Calu3 (cell line): ENCODE measurements at regions of chr3 and their contacts with region 1.

Region 1: DNA sequence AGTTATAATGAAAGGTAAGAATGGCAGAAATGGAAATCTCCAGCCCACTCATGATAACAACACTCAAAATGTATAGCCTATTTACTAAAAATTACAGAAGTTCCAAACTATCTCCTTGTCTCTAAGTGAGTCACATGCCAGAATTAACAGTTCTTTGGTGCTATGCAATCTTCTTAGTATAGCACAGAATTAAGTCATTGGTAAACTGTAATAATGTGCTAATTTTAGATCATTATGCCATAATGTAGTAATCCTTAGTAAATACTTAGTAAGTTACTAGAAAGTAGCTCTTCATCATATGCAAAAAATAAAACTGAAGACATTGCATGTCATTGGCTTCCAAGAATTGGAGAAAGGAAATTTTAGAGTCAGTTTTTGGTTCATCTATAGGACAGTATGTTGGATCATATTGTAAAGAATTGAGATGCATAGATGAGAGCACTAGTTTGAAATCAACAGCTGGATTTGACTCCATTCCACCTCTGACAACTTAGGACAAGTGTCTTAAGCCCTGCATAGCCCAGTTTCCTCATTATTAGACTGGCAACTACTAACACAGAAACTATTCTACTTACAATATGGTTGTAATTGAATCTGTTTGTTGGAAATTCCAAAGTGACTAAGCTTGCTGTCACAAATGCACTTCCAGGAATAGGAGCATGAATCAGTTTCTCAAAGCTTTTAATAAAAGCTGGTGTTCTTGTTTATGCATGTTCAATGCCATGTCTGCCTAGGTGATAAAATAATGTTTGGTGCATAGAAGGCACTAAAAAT is 40.1 kb upstream of the CD47 start:
- DNase-seq: no peak
- H3K4me3 Mint-ChIP-seq: peak overlapping the region; percentile 2
- H3K27ac Mint-ChIP-seq: peak overlapping the region; percentile 56
- H3K4me1 Mint-ChIP-seq: peaks cover 62% of the 10 kb centered on the region
- H3K27me3 Mint-ChIP-seq: no peaks in the 10 kb centered on the region
- CTCF ChIP-seq: no peak

Region 2: GRCh38 chr3:107992981-107993684 is 137.8 kb before region 1 on chr3:
- CTCF ChIA-PET with region 1: no interaction called
- intact Hi-C with region 1: loop called (anchors 10 kb)
- DNase-seq: peak; percentile 67
- H3K4me3 Mint-ChIP-seq: no peak overlapping the region
- H3K27ac Mint-ChIP-seq: peak overlapping the region; percentile 50
- H3K4me1 Mint-ChIP-seq: peaks cover 59% of the 10 kb centered on the region
- H3K27me3 Mint-ChIP-seq: no peaks in the 10 kb centered on the region
- CTCF ChIP-seq: no peak

Region 3: DNA sequence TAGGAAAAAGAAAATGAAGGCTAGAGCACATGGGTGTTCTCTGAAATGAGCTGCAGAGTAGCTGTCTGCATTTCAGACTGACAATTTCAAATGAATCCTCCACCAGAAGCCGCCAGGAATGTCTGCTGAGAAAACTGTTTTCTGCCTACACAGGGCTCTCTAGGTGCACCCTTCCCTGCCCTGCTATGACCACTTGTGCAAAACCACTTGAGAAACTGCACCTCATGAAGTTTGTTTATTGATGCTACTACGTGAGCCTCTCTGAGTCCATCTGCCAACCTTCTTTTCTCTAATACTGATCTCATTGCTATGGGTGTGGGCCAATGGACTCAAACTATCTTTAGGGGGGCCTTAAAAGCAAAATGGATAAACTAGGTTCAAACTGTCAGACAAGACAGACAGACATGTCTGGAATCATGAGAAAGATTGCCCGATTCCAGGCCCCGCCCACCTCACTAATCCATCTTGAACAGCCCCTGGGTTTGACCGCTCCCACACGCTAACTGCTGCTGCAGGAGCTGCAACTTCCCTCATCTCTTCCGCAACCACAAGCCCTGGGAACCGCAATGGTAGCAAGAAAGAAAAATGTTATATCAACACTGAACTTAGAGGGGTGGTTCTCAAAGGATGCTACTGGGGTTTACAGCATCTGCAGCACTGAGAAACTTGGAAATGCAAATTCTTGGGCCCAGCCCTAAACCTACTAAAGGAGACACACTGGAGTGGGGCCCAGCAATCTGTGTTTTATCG is 31.0 kb before region 1 on chr3:
- CTCF ChIA-PET with region 1: interaction called, 7 read pairs
- intact Hi-C with region 1: loop called (anchors 5 kb)
- DNase-seq: no peak
- H3K4me3 Mint-ChIP-seq: no peak overlapping the region
- H3K27ac Mint-ChIP-seq: no peak overlapping the region
- H3K4me1 Mint-ChIP-seq: peaks cover 57% of the 10 kb centered on the region
- H3K27me3 Mint-ChIP-seq: no peaks in the 10 kb centered on the region
- CTCF ChIP-seq: no peak

Region 4: DNA sequence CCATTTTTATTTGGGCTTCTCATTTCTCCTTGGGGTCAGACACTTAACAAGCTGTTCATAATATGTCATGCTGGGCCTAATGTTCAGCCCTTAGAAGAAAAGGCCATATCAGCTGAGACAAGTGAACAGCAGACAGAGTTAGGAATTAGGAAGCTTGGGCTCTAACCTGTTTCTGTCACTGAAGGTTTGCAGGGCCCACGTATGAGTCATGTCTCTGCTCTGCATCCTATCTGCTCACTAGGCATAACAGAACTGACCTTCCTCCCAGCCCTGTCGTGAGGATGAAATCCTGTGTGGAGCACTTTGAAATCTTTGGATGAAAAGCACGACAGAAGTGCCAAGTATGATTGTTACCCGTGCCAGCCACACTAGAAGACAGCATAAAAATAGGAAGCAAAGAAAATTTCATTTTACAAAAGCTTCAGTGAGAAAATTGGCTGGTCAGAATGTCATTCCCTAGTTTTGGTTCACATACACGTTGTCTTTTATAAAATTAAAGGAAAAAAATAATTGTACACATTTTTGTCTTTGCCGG is 13.6 kb before region 1 on chr3:
- CTCF ChIA-PET with region 1: no interaction called
- intact Hi-C with region 1: no loop called
- DNase-seq: no peak
- H3K4me3 Mint-ChIP-seq: no peak overlapping the region
- H3K27ac Mint-ChIP-seq: no peak overlapping the region
- H3K4me1 Mint-ChIP-seq: no peaks in the 10 kb centered on the region
- H3K27me3 Mint-ChIP-seq: no peaks in the 10 kb centered on the region
- CTCF ChIP-seq: no peak

Region 5: DNA sequence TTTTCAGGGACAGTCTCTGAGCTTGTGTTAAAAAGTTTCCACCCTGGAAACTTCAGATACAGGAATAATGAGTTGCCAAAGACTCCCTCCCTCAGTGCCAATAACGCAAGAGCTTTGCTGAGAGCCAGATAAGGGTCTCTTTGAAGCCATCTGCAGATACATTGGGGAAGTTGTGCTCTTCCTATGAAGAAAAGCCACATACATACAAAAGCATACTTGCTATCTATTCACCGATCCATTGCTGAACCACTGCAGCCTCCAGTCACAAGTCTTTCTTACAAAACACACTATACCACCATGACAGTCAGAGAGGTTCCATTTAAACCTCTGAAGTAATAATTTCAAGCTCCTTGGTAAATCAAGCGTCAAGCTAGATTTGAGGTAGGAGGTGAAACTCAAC is 636.4 kb after region 1 on chr3:
- CTCF ChIA-PET with region 1: no interaction called
- intact Hi-C with region 1: no loop called
- DNase-seq: no peak
- H3K4me3 Mint-ChIP-seq: no peak overlapping the region
- H3K27ac Mint-ChIP-seq: no peak overlapping the region
- H3K4me1 Mint-ChIP-seq: no peaks in the 10 kb centered on the region
- H3K27me3 Mint-ChIP-seq: peaks cover 29% of the 10 kb centered on the region
- CTCF ChIP-seq: no peak